MCF 10A (cell line): ENCODE measurements at regions of chr20 and their contacts with region 1.

Region 1: GRCh38 chr20:32031007-32031958 is 20.8 kb upstream of the HCK start:
- DNase-seq: peak; percentile 82
- H3K4me3 Mint-ChIP-seq: no peak overlapping the region
- H3K27ac Mint-ChIP-seq: no peak overlapping the region
- H3K4me1 Mint-ChIP-seq: peaks cover 4% of the 10 kb centered on the region
- H3K27me3 Mint-ChIP-seq: peaks cover 46% of the 10 kb centered on the region
- CTCF ChIP-seq: peak; percentile 93

Region 2: DNA sequence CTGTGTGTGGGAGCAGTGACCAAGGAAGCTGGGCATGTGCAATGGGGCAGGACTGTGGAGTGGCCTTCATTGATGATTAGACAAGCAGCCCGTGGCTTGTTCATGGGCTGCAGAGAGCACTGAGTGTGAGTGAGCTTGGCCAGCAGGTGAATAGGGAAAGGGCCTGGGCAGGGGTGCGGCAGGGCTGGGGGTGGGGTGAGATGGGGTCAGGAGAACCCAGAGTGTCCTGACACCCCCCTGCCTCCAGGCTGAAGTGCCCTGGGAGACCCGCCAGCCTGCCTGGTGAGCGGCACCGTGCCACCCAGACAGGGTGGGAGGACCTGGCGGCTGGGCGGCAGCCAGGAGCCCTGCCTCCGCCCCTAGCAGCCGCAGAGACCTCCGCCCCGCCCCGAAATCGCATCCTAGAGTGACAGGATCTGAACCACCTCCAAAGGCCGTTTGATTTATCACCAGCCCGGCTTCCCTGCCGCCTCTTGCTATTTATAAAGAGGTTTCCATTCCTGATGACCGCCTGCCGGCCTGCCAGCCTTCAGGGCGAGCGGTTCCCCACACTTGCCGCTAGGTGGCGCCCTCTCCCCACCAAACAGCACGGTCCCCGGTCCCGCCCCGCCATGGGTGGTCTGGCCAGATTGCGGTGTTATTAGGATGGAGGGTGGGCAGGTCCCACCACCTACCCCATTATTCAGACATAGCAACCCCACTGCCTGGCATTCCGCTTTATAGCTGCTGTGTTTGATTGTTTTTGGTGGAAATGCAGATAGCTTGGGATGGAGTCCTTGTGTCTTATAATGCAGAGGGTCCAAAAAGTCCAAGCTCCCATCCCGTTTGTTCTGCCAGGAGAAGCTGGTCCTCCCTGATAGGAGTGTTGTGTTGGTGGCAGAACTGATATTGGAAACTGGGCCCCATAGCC is 208.6 kb before region 1 on chr20:
- CTCF ChIA-PET with region 1: interaction called, 158 read pairs
- POLR2A ChIA-PET with region 1: interaction called, 3 read pairs
- intact Hi-C with region 1: loop called (anchors 1 kb)
- DNase-seq: peak; percentile 70
- H3K4me3 Mint-ChIP-seq: no peak overlapping the region
- H3K27ac Mint-ChIP-seq: no peak overlapping the region
- H3K4me1 Mint-ChIP-seq: no peaks in the 10 kb centered on the region
- H3K27me3 Mint-ChIP-seq: no peaks in the 10 kb centered on the region
- CTCF ChIP-seq: peak; percentile 99

Region 3: DNA sequence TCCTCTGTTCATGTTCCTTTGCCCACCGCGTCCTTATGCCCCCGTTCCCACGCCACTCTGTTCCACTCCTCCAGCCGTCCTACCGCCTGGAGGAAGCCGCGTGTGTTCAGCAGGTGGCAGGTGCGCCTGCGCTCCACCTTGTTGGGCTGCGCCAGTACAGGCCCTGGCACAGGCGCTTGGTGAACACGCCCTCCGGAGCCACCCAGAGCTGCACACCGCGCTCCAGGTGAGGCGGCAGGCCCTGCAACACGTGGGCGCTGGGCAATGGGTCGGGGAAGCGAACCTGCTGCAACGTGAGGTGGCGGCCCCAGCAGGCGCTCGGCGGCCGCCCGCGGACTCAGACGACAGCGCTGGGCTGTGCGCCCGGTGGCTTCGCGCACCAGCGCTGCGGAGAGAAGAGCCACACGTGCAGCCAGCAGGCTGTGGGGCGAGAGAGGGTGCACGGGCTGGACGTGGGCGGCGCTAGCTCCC is 181.8 kb before region 1 on chr20:
- CTCF ChIA-PET with region 1: interaction called, 180 read pairs
- POLR2A ChIA-PET with region 1: interaction called, 3 read pairs
- intact Hi-C with region 1: loop called (anchors 1 kb)
- DNase-seq: no peak
- H3K4me3 Mint-ChIP-seq: no peak overlapping the region
- H3K27ac Mint-ChIP-seq: no peak overlapping the region
- H3K4me1 Mint-ChIP-seq: no peaks in the 10 kb centered on the region
- H3K27me3 Mint-ChIP-seq: peaks cover 33% of the 10 kb centered on the region
- CTCF ChIP-seq: no peak

Region 4: GRCh38 chr20:31951530-31952453 is 79.5 kb before region 1 on chr20 and contains the start of gene PDRG1:
- CTCF ChIA-PET with region 1: interaction called, 44 read pairs
- POLR2A ChIA-PET with region 1: no interaction called
- intact Hi-C with region 1: loop called (anchors 5 kb)
- DNase-seq: peak; percentile 97
- H3K4me3 Mint-ChIP-seq: peak within 1 kb of the TSS; percentile 81
- H3K27ac Mint-ChIP-seq: peak within 1 kb of the TSS; percentile 91
- H3K4me1 Mint-ChIP-seq: peaks cover 13% of the 10 kb centered on the region
- H3K27me3 Mint-ChIP-seq: peaks cover 29% of the 10 kb centered on the region
- CTCF ChIP-seq: peak; percentile 71
- total RNA-seq, gene PDRG1: 12.2 and 16.3 TPM in 2 replicates

Region 5: GRCh38 chr20:32018269-32019074 is 12.8 kb before region 1 on chr20:
- CTCF ChIA-PET with region 1: interaction called, 39 read pairs
- POLR2A ChIA-PET with region 1: interaction called, 3 read pairs
- intact Hi-C with region 1: no loop called
- DNase-seq: peak; percentile 34
- H3K4me3 Mint-ChIP-seq: peak overlapping the region; percentile 75
- H3K27ac Mint-ChIP-seq: no peak overlapping the region
- H3K4me1 Mint-ChIP-seq: no peaks in the 10 kb centered on the region
- H3K27me3 Mint-ChIP-seq: peaks cover 91% of the 10 kb centered on the region
- CTCF ChIP-seq: no peak

Region 6: DNA sequence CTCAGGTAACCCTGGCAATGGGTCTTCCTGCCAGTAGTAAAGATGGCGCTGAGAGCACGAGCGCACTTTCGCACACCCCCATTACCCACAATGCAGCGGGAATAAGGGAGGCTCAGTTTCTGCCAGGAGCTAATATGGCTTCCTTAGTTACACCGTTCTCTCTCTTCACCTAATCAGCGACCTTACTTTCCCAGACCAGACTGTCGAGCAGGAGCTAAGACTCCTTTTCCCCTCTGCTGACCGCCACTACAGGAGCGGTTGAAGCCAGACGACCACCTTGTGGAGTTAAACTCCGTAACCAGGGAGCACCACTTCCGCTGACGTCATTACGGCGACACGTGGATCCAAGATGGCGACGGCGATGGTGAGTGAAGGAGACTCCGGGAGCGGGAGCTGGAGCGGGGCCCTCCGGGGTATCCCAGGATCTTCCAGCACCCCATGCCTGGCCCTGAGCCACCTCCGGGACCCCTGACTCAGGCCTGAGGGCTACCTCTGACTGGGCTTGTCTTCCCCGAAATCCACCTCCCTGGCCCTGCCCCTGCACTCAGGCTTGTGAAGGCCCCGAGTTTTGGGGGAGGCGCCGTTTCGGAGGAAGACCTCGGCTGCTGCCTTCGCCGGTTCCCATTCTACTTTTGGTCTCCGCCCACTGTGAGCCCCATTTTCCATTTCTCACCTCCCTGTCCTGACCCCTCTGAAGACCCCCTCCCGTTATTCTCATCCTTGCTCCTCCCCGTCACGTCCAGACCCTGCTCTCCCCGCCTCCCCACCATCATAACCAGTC is 78.3 kb after region 1 on chr20 and contains the start of gene TM9SF4:
- CTCF ChIA-PET with region 1: interaction called, 10 read pairs
- POLR2A ChIA-PET with region 1: no interaction called
- intact Hi-C with region 1: no loop called
- DNase-seq: peak; percentile 96
- H3K4me3 Mint-ChIP-seq: peak within 1 kb of the TSS; percentile 76
- H3K27ac Mint-ChIP-seq: peak within 1 kb of the TSS; percentile 99
- H3K4me1 Mint-ChIP-seq: peaks cover 28% of the 10 kb centered on the region
- H3K27me3 Mint-ChIP-seq: peaks cover 4% of the 10 kb centered on the region
- CTCF ChIP-seq: no peak
- total RNA-seq, gene TM9SF4: 50.6 and 52.3 TPM in 2 replicates

Region 7: DNA sequence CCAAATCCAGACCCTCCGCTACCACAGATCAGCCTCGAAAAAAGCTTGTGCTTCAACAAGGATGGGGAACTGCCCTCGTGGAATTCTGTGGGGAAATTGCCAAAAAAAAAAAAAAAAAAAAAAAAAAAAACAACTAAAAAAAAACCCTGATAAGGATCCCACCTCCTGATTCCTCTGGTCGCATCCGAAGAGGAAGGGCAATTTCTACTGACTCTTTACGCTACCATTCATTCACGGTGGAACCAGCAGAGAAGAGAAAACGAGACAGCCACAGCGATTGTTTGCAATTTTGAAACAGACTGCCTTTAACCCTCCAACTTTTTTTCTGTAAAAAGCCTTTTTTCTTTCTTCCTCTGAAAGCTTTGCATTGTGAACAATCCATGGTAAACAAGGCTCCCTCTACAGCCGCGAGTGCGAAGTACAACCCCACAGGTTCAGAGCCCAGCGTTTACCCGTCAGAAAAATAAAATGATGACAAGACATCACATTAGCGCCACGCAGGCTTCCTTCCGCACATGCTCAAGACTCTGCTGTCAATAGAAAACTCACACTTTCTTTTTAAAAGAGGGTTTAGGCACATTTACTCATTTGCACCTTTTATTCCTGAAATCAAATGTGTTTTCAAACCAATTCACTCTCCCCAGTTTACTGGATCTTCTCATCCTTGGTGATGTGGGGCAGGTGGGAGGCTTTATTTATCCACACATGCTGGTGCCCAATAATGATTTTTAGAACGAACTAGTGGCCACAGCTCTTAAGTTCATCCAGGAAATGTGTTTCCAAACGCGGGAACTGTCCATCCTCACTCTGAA is 453.9 kb after region 1 on chr20:
- CTCF ChIA-PET with region 1: no interaction called
- POLR2A ChIA-PET with region 1: no interaction called
- intact Hi-C with region 1: no loop called
- DNase-seq: peak; percentile 79
- H3K4me3 Mint-ChIP-seq: peak overlapping the region; percentile 75
- H3K27ac Mint-ChIP-seq: no peak overlapping the region
- H3K4me1 Mint-ChIP-seq: peaks cover 8% of the 10 kb centered on the region
- H3K27me3 Mint-ChIP-seq: peaks cover 37% of the 10 kb centered on the region
- CTCF ChIP-seq: peak; percentile 87